ENCODE measurements at regions of chr21 and their contacts with region 1.

Region 1: GRCh38 chr21:26769613-26770188 is 75.5 kb downstream of the ADAMTS1 start:
- DNase-seq: no peak
- H3K4me3 ChIP-seq: no peak overlapping the region
- H3K27ac ChIP-seq: no peak overlapping the region
- H3K4me1 ChIP-seq: no peaks in the 10 kb centered on the region
- H3K27me3 ChIP-seq: no peaks in the 10 kb centered on the region
- CTCF ChIP-seq: peak in 3 of 4 experiments; percentile 51 to 63 (median 58)
- POLR2A ChIP-seq: no peak

Region 2: GRCh38 chr21:26835027-26835713 is 65.5 kb after region 1 on chr21:
- intact Hi-C with region 1: loop called (anchors 5 kb)
- DNase-seq: no peak
- H3K4me3 ChIP-seq: no peak overlapping the region
- H3K27ac ChIP-seq: no peak overlapping the region
- H3K4me1 ChIP-seq: no peaks in the 10 kb centered on the region
- H3K27me3 ChIP-seq: no peaks in the 10 kb centered on the region
- CTCF ChIP-seq: no peak
- POLR2A ChIP-seq: no peak

Region 3: GRCh38 chr21:26945916-26946675 is 176.4 kb after region 1 on chr21:
- intact Hi-C with region 1: no loop called
- DNase-seq: no peak
- H3K4me3 ChIP-seq: no peak overlapping the region
- H3K27ac ChIP-seq: no peak overlapping the region
- H3K4me1 ChIP-seq: no peaks in the 10 kb centered on the region
- H3K27me3 ChIP-seq: no peaks in the 10 kb centered on the region
- CTCF ChIP-seq: no peak
- POLR2A ChIP-seq: no peak